Sigmoid colon (tissue), 7 donors: ENCODE measurements at regions of chr3 and their contacts with region 1.

Region 1: DNA sequence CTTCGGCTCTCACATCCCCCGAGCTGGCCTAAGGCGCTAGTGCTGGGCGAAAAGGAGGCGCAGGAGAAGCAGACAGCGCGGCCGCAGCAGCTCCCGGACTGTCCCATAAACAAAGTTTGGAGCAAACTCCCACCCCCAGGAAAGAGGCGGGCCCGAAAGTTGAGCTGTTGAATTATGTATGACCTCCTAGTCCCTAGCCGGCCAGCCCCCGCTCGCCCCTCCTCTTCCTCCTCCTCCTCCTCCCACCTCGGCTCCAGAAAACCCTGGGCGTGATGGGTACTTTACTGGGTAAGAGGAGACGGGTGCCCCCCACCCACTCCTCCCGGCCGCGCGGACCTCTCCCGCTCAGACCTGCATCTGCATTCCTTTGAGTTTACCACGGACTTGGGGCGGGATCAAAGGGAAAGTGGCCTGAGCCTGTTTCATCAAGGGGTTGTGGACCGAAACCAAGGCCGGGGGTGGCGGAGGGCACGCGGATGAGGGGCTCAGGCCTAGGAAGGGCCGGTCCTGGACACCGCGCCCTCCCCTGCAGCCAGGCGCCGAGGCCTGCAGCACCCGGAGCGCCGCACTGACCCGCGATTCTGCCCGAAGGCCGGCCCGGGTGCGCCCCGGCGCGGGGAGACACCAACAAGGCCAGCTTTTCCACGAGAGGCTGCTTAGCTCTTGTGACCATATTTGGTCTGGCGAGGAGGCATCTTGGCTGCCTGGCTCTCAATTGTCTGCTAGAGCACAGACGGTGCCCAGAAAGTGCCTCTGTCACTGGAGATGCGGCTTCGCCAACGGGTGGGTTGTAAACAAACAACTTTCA is at the start of gene WWTR1:
- DNase-seq: peak; percentile 99
- H3K4me3 ChIP-seq: peak within 1 kb of the TSS; percentile 57 to 81 (median 72)
- H3K27ac ChIP-seq: peak within 1 kb of the TSS; percentile 93 to 99 (median 98)
- H3K4me1 ChIP-seq: peaks cover 0 to 56% (median 50%) of the 10 kb centered on the region in 4 donors
- H3K27me3 ChIP-seq: no peaks in the 10 kb centered on the region
- CTCF ChIP-seq: no peak
- EP300 ChIP-seq: peak; percentile 62 to 90 (median 74)
- POLR2A ChIP-seq: peak; percentile 91 to 97
- total RNA-seq, gene WWTR1: 243 to 340 (median 317) TPM

Region 2: GRCh38 chr3:149527531-149528339 is 130.4 kb before region 1 on chr3:
- intact Hi-C with region 1: loop called (anchors 2 kb)
- DNase-seq: no peak
- H3K4me3 ChIP-seq: no peak overlapping the region
- H3K27ac ChIP-seq: peak overlapping the region; percentile 52 to 66 (median 56)
- H3K4me1 ChIP-seq: peaks cover 0 to 62% (median 37%) of the 10 kb centered on the region in 4 donors
- H3K27me3 ChIP-seq: no peaks in the 10 kb centered on the region
- CTCF ChIP-seq: peak in 1 of 4 experiments; percentile 26
- EP300 ChIP-seq: no peak
- POLR2A ChIP-seq: no peak

Region 3: DNA sequence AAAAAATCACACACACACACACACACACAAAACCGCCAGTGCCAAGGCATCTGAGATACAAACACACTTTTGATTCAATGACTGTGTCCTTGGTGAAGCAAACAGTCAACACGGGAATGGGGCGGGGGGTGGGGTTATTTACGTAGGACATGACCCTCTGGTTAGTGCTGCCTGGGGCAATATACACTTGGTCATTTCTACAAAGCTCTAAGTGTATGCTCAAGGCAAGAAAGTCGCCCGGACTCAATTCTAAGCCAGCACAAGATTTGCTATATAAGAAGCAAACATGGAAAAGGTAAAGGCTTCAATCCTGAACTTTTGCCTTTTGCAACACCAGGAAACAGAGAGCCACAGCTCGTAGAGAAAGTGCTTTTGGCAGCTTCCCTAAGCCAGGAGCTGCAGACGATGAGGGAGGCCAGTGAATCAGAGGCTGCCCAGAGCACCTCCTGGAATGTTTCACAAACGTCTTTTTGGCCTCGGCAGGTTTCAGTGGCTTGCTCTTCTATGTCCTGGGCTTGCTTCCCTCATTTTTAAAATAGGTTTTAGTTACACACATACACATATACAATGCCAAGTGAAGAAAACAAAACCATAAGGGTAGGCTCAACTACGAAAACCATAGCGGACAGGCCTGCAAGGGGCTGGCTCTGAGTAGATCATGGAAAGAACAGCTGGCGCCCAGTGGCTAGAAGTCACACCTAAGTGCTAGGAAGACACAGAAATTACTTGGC is 110.0 kb before region 1 on chr3:
- intact Hi-C with region 1: loop called (anchors 5 kb)
- DNase-seq: peak; percentile 94
- H3K4me3 ChIP-seq: peak overlapping the region in 1 of 4 donors; percentile 2
- H3K27ac ChIP-seq: peak overlapping the region; percentile 78 to 87 (median 82)
- H3K4me1 ChIP-seq: peaks cover 0 to 91% (median 78%) of the 10 kb centered on the region in 4 donors
- H3K27me3 ChIP-seq: no peaks in the 10 kb centered on the region
- CTCF ChIP-seq: no peak
- EP300 ChIP-seq: peak in 3 of 4 donors; percentile 71 to 89 (median 83)
- POLR2A ChIP-seq: no peak

Region 4: DNA sequence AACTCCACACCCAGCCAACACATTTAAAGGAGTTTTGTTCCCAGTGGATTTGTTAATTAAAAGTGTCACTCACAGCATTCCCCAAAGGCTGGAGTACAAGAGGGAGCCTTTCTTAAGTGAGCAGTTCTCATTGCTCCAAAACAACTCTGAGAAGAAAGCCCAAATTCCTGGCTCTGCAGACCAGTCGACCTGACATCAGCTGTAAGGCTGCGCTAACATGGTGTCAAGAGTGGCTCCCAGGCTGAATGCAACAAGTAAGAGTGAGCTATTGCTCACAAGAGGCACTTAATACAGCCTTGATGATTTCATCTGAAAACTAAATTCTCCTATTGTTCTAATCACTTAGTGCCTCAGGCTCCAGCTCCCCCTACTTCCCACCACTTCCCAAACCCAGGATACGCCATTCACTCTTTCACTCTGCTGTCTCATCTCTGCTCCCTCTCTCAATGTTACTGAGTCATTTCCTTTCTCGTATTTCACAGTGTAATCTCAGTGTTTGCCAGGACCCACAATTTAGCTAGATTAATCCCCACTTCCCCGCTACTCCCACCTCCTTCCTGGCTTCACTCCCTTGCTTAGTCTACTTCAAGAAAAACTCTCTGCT is 82.1 kb before region 1 on chr3:
- intact Hi-C with region 1: loop called (anchors 5 kb)
- DNase-seq: no peak
- H3K4me3 ChIP-seq: peak overlapping the region in 1 of 4 donors; percentile 2
- H3K27ac ChIP-seq: peak overlapping the region; percentile 64 to 84 (median 82)
- H3K4me1 ChIP-seq: peaks cover 0 to 98% (median 84%) of the 10 kb centered on the region in 4 donors
- H3K27me3 ChIP-seq: no peaks in the 10 kb centered on the region
- CTCF ChIP-seq: no peak
- EP300 ChIP-seq: no peak
- POLR2A ChIP-seq: no peak

Region 5: GRCh38 chr3:149717391-149718056 is 59.4 kb after region 1 on chr3:
- intact Hi-C with region 1: loop called (anchors 5 kb)
- DNase-seq: peak; percentile 79
- H3K4me3 ChIP-seq: no peak overlapping the region
- H3K27ac ChIP-seq: peak overlapping the region in 3 of 4 donors; percentile 2 to 38 (median 34)
- H3K4me1 ChIP-seq: peaks cover 0 to 7% (median 6%) of the 10 kb centered on the region in 4 donors
- H3K27me3 ChIP-seq: no peaks in the 10 kb centered on the region
- CTCF ChIP-seq: peak; percentile 74 to 80 (median 78)
- EP300 ChIP-seq: no peak
- POLR2A ChIP-seq: no peak

Region 6: GRCh38 chr3:149812606-149813366 is 154.7 kb after region 1 on chr3 and contains the start of gene RNF13:
- intact Hi-C with region 1: loop called (anchors 5 kb)
- DNase-seq: peak; percentile 99
- H3K4me3 ChIP-seq: peak within 1 kb of the TSS; percentile 66 to 75 (median 70)
- H3K27ac ChIP-seq: peak within 1 kb of the TSS; percentile 97 to 99 (median 97)
- H3K4me1 ChIP-seq: peaks cover 0 to 57% (median 45%) of the 10 kb centered on the region in 4 donors
- H3K27me3 ChIP-seq: no peaks in the 10 kb centered on the region
- CTCF ChIP-seq: no peak
- EP300 ChIP-seq: peak in 1 of 4 donors; percentile 47
- POLR2A ChIP-seq: peak; percentile 59 to 61
- total RNA-seq, gene RNF13: 78.3 to 110 (median 94.1) TPM